ENCODE measurements at regions of chr1 and their contacts with region 1.

Region 1: GRCh38 chr1:107897438-107898345 is 67.3 kb downstream of the VAV3 start:
- DNase-seq: peak; percentile 40
- ATAC-seq: peak; percentile 82
- H3K4me3 Mint-ChIP-seq: peak overlapping the region; percentile 33
- H3K27ac Mint-ChIP-seq: peak overlapping the region; percentile 92
- H3K4me1 Mint-ChIP-seq: peaks cover 88% of the 10 kb centered on the region
- H3K27me3 Mint-ChIP-seq: no peaks in the 10 kb centered on the region
- CTCF ChIP-seq: no peak

Region 2: DNA sequence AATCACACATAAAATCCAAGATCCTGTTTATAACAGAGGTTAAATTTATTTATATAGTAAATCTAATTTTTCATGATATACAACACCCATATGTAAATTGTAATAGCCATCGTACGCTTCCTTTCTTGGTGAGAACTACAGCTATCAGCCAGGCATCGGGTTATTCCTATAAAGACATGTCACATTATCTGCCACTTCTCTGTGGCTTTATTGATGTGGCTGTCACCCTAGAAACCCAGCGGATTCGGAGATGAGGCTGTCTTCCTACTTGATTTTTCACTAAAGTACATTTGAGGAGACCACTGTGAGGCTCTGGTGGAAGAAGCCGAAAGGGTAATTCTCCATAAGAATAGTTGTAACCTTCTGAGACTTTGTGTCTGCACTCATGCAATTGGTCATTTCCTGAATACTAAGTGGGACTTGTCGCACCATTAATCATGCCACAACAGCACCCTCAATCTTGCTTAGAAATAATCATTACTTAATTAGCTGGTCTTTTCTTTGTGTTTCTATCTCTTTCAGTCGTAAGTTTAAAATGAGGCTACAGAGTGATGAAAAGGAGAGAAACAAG is 650.8 kb before region 1 on chr1:
- CTCF ChIA-PET with region 1: no interaction called
- POLR2A ChIA-PET with region 1: no interaction called
- intact Hi-C with region 1: loop called (anchors 10 kb)
- DNase-seq: no peak
- ATAC-seq: peak; percentile 78
- H3K4me3 Mint-ChIP-seq: peak overlapping the region; percentile 76
- H3K27ac Mint-ChIP-seq: peak overlapping the region; percentile 96
- H3K4me1 Mint-ChIP-seq: peaks cover 45% of the 10 kb centered on the region
- H3K27me3 Mint-ChIP-seq: no peaks in the 10 kb centered on the region
- CTCF ChIP-seq: no peak

Region 3: GRCh38 chr1:107795994-107796393 is 101.7 kb before region 1 on chr1:
- CTCF ChIA-PET with region 1: interaction called, 4 read pairs
- POLR2A ChIA-PET with region 1: interaction called, 4 read pairs
- intact Hi-C with region 1: loop called (anchors 1 kb)
- DNase-seq: no peak
- ATAC-seq: peak; percentile 68
- H3K4me3 Mint-ChIP-seq: peak overlapping the region; percentile 73
- H3K27ac Mint-ChIP-seq: peak overlapping the region; percentile 90
- H3K4me1 Mint-ChIP-seq: peaks cover 80% of the 10 kb centered on the region
- H3K27me3 Mint-ChIP-seq: no peaks in the 10 kb centered on the region
- CTCF ChIP-seq: no peak

Region 4: DNA sequence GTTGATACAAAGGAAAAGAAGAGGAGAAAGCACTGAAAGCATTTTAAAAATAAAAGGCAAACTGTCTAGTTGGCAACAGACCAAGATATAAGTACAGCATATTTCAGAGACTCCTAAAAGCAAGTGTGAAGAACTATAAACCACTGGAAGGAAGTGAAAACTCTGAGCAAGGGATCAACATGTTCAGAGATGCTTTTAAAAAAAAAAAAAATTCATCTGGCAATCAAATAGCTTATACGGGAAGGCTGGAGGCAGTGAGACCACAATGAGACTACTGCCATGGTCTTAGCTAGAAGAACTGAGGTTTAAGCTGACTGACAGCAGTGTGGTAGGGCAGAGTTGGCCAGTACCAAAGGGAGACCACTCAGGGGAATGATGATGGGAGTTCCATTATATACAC is 57.0 kb before region 1 on chr1:
- CTCF ChIA-PET with region 1: no interaction called
- POLR2A ChIA-PET with region 1: interaction called, 4 read pairs
- intact Hi-C with region 1: loop called (anchors 1 kb)
- DNase-seq: no peak
- ATAC-seq: peak; percentile 46
- H3K4me3 Mint-ChIP-seq: peak overlapping the region; percentile 67
- H3K27ac Mint-ChIP-seq: peak overlapping the region; percentile 75
- H3K4me1 Mint-ChIP-seq: peaks cover 89% of the 10 kb centered on the region
- H3K27me3 Mint-ChIP-seq: no peaks in the 10 kb centered on the region
- CTCF ChIP-seq: no peak

Region 5: GRCh38 chr1:107883562-107883961 is 14.1 kb before region 1 on chr1:
- CTCF ChIA-PET with region 1: interaction called, 3 read pairs
- POLR2A ChIA-PET with region 1: interaction called, 6 read pairs
- intact Hi-C with region 1: loop called (anchors 1 kb)
- DNase-seq: no peak
- ATAC-seq: peak; percentile 28
- H3K4me3 Mint-ChIP-seq: no peak overlapping the region
- H3K27ac Mint-ChIP-seq: no peak overlapping the region
- H3K4me1 Mint-ChIP-seq: peaks cover 63% of the 10 kb centered on the region
- H3K27me3 Mint-ChIP-seq: no peaks in the 10 kb centered on the region
- CTCF ChIP-seq: no peak

Region 6: GRCh38 chr1:107936498-107937481 is 39.1 kb after region 1 on chr1:
- CTCF ChIA-PET with region 1: interaction called, 4 read pairs
- POLR2A ChIA-PET with region 1: interaction called, 5 read pairs
- intact Hi-C with region 1: loop called (anchors 1 kb)
- DNase-seq: no peak
- ATAC-seq: peak; percentile 51
- H3K4me3 Mint-ChIP-seq: peak overlapping the region; percentile 69
- H3K27ac Mint-ChIP-seq: peak overlapping the region; percentile 70
- H3K4me1 Mint-ChIP-seq: peaks cover 87% of the 10 kb centered on the region
- H3K27me3 Mint-ChIP-seq: no peaks in the 10 kb centered on the region
- CTCF ChIP-seq: no peak

Region 7: GRCh38 chr1:108125312-108126138 is 227.8 kb after region 1 on chr1:
- CTCF ChIA-PET with region 1: interaction called, 7 read pairs
- POLR2A ChIA-PET with region 1: no interaction called
- intact Hi-C with region 1: loop called (anchors 1 kb)
- DNase-seq: peak; percentile 42
- ATAC-seq: peak; percentile 91
- H3K4me3 Mint-ChIP-seq: no peak overlapping the region
- H3K27ac Mint-ChIP-seq: peak overlapping the region; percentile 2
- H3K4me1 Mint-ChIP-seq: peaks cover 4% of the 10 kb centered on the region
- H3K27me3 Mint-ChIP-seq: no peaks in the 10 kb centered on the region
- CTCF ChIP-seq: peak; percentile 97

Measured in activated B cell treated with CpG ODN at 0.5 μM for 24 hours (primary cell).